ENCODE measurements at regions of chr17 and their contacts with region 1.

Region 1: DNA sequence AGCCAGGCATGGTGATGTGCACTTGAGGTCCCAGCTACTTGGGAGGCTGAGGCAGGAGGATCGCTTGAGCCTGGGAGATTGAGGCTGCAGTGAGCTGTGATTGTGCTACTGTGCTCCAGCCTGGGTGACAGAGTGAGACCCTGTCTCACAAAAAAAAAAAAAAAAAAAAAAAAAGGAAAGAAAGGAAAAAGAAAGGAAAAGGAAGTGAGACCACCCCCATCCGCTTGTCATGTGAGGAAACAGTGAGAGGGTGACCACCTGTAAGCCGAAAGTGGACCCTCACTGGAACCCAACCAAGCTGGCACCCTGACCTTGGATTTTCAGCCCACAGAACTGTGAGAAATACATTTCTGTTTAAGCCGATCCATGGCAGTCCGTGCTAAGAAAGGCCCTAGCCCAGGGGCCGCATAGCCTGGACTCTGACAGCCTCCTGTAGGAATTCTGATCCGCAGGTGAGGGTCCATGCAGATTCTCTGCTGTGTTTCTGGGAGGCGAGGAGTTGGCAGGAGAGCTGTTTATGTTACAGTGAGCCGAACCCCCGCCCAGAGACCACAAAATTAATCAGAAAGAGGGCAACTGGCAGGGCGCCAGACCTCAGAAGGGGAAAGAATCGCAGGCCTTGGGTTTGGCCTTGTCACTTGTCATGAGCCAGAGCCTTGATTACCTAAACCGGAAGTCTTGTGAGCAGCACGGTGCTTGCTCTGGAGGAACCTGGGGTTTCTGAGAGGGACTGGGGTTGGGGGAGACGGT is 945 bp downstream of the SGSH start:
- DNase-seq: peak; percentile 95
- ATAC-seq: peak; percentile 87
- H3K4me3 Mint-ChIP-seq: peak overlapping the region; percentile 89
- H3K27ac Mint-ChIP-seq: peak overlapping the region; percentile 92
- H3K4me1 Mint-ChIP-seq: peaks cover 27% of the 10 kb centered on the region
- H3K27me3 Mint-ChIP-seq: no peaks in the 10 kb centered on the region

Region 2: DNA sequence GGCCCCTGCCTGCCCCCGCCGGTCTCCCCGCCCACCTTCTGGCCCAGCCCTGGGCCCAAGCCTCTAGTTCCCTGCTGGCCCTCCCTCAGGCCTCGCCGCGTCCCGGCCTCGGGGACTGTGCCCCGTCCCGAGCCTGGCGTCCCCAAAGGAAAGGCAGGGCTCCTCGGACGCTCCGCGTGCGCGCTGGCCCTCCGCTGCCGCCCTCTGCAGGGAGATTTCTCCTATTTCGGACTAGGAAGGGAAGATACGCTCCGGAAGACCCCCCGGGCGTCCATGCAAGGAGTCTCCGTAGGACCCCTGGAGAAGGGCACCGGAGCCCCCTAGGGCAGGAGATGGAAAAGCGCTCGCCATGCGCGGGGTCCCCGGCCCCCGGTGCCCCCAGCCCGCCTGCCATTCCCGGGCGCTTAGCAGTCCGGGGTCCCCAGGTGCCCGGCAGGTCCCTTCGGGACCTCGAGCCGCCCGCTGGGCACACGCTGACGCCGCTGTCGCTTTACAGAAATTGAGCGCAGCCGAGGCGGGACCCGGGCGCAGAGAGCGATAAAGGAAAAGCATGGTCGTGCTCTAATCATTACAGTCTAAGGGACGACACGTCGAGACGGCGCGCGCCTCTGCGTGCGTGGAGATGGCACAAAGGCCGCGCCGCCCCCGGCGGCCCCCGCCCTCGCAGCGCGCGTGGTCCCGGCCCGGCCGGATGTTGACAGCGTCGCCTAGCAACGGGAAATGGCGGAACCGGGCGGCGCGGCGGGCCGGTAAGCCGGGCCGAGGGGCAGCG is 183.1 kb before region 1 on chr17 and contains the start of gene CCDC40:
- CTCF ChIA-PET with region 1: no interaction called
- POLR2A ChIA-PET with region 1: no interaction called
- intact Hi-C with region 1: loop called in 1 of 2 experiments (anchors 2 kb)
- DNase-seq: peak; percentile 82
- ATAC-seq: peak; percentile 72
- H3K4me3 Mint-ChIP-seq: peak within 1 kb of the TSS; percentile 82
- H3K27ac Mint-ChIP-seq: no peak within 1 kb of the TSS
- H3K4me1 Mint-ChIP-seq: peaks cover 7% of the 10 kb centered on the region
- H3K27me3 Mint-ChIP-seq: peaks cover 12% of the 10 kb centered on the region
- total RNA-seq, gene CCDC40: 0.56 to 0.57 TPM

Region 3: DNA sequence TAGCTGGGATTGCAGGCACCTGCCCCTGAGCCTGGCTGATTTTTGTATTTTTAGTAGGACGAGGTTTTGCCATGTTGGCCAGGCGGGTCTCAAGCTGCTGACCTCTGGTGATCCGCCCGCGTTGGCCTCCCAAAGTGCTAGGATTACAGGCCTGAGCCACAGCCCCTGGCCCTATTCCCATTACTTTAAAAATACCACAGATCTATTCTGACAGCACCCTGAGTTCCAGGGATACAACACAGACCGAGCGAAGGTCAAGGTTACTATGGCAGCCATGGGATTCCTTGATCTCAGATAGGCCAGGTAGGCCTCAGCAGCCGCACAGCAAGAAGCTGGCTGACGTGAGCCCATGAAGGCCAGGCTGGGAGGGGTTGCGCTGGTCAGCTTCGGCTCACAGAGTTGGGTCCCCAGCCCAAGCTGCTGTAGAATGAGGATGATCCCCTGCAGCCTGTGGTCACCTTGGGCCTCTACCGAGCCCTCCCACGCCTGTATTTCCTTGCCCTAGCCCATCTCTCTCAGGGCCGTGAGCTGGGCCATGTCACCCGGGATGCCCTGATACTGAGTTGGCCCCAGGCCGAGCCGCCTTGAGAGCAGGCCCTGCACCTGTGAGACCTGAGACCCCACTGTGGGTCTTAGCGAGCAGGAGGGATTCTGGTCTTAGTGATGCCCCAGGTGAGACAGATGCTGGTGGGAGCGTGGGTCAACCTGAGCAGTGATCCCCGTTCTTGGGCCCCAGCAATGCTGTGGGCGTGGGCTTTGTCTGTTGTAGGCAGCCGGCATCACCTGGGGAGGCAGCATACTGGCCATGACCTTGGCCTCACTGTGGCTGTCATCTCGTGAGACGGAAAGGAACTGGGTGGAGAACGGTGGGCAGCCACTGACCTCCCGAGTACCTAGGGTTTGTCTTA is 24.6 kb after region 1 on chr17:
- CTCF ChIA-PET with region 1: no interaction called
- POLR2A ChIA-PET with region 1: no interaction called
- intact Hi-C with region 1: no loop called
- DNase-seq: no peak
- ATAC-seq: no peak
- H3K4me3 Mint-ChIP-seq: no peak overlapping the region
- H3K27ac Mint-ChIP-seq: no peak overlapping the region
- H3K4me1 Mint-ChIP-seq: no peaks in the 10 kb centered on the region
- H3K27me3 Mint-ChIP-seq: no peaks in the 10 kb centered on the region

Region 4: DNA sequence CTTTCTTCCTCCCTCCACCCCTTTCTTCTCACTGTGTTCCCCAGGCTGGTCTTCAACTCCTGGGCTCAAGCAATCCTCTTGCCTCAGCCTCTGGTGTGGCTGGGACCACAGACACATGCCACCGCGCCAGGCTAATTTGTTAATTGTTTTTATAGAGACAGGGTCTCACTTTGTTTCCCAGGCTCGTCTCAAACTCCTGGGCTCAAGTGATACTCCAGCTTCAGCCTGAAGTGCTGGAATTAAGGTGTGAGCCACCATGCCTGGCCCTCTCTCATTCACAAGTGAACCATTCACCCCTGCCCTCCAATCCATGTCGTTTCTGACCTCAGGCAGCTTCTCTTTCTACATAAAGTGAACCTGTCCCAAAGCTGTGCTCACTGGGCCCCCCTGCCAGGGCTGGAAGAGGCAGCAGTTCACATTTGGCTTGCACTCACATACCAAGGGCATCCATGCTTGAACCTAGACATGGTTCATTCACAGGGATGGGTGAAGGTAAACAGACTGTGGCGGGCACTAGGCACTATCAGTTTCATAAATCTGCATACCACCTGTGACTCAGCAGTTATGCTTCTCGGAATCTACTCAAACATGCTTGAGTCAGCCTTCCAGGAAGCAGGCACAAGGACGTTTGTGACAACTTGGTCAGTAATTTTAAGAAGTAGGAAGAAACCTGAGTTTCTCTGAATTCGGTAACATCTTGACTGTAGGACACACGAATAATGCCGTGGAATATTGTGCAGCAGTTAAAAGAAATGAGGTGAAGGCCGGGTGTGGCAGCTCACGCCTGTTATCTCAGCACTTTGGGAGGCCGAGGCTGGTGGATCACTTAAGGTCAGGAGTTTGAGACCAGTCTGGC is 35.4 kb after region 1 on chr17:
- CTCF ChIA-PET with region 1: interaction called, 4 read pairs
- POLR2A ChIA-PET with region 1: interaction called, 4 read pairs
- intact Hi-C with region 1: loop called (anchors 1 to 2 kb)
- DNase-seq: peak; percentile 83
- ATAC-seq: peak; percentile 62
- H3K4me3 Mint-ChIP-seq: peak overlapping the region; percentile 64
- H3K27ac Mint-ChIP-seq: peak overlapping the region; percentile 97
- H3K4me1 Mint-ChIP-seq: peaks cover 71% of the 10 kb centered on the region
- H3K27me3 Mint-ChIP-seq: no peaks in the 10 kb centered on the region

Measured in activated CD4-positive, alpha-beta T cell treated with anti-CD3 and anti-CD28 coated beads for 36 hours (primary cell).